KBM-7 (cell line): ENCODE measurements at regions of chr9 and their contacts with region 1.

Region 1: GRCh38 chr9:22307013-22307711 is 139.5 kb upstream of the DMRTA1 start:
- DNase-seq: peak; percentile 54

Region 2: DNA sequence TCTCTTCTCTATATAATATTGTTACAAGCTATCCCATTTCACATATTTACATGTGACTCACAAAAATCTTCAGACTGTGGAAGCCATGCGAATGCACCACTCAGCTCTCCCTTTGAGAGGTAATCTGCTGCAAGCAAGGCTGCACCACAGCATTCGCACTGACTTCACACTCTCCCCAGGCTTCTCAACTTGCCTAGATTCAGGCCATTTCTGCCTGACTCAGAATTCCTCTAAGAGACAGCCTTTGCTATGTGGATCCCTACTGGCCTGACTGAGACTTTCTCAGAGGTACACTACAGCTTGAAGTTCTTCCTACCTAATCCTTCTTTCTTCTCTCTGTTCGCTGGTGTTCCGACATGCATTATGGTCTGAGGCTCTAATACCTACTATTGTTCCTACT is 118.4 kb after region 1 on chr9:
- in situ Hi-C with region 1: no loop called
- DNase-seq: no peak

Region 3: DNA sequence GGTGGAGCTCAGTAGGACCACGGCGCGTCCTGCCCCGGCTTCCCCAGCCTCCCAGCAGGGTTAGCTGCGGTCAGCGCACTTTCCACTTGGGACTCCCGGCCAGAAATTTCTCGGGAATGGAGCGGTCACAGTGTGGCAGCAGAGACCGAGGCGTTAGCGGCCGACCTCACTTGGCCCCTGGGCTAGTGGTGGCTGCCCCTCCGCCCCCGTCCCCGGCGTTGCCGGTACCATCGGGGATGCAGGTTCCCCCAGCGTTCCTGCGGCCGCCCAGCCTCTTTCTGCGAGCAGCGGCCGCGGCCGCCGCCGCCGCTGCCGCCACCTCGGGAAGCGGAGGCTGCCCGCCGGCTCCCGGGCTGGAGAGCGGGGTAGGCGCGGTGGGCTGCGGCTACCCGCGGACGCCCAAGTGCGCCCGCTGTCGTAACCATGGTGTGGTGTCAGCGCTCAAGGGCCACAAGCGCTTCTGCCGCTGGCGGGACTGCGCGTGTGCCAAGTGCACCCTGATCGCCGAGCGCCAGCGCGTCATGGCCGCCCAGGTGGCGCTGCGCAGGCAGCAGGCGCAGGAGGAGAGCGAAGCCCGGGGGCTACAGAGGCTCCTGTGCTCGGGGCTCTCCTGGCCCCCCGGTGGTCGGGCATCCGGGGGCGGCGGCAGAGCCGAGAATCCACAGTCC is 139.9 kb after region 1 on chr9:
- in situ Hi-C with region 1: loop called (anchors 10 kb)
- DNase-seq: peak; percentile 82